K562 (cell line): ENCODE measurements at regions of chr4 and their contacts with region 1.

Region 1: GRCh38 chr4:155953151-155954114 is at the start of gene CTSO:
- DNase-seq: peak; percentile 9 to 40 (median 22)
- ATAC-seq: peak; percentile 98
- H3K4me3 ChIP-seq: peak within 1 kb of the TSS; percentile 51
- H3K27ac ChIP-seq: no peak within 1 kb of the TSS
- H3K4me1 ChIP-seq: peaks cover 0 to 7% of the 10 kb centered on the region in 2 experiments; a peak in 2 of 5 replicates
- H3K27me3 ChIP-seq: no peaks in the 10 kb centered on the region
- CTCF ChIP-seq: peak; percentile 35 to 53 (median 38); a peak in 4 of 6 replicates
- EP300 ChIP-seq: no peak
- POLR2A ChIP-seq: no peak
- RAD21 ChIP-seq: peak; percentile 32 to 38; a peak in 3 of 4 replicates
- polyA plus RNA-seq, gene CTSO: not detected

Region 2: GRCh38 chr4:155442267-155443105 is 510.9 kb before region 1 on chr4:
- CTCF ChIA-PET with region 1: no interaction called
- POLR2A ChIA-PET with region 1: no interaction called
- in situ Hi-C with region 1: no loop called
- intact Hi-C with region 1: loop called (anchors 5 kb)
- DNase-seq: peak; percentile 23 to 48 (median 46)
- ATAC-seq: peak; percentile 56; the same call in 1 of the 3 replicates
- H3K4me3 ChIP-seq: no peak overlapping the region
- H3K27ac ChIP-seq: no peak overlapping the region
- H3K4me1 ChIP-seq: no peaks in the 10 kb centered on the region
- H3K27me3 ChIP-seq: no peaks in the 10 kb centered on the region
- CTCF ChIP-seq: peak; percentile 42 to 65 (median 58)
- EP300 ChIP-seq: no peak
- POLR2A ChIP-seq: no peak
- RAD21 ChIP-seq: peak in 1 of 2 experiments; percentile 43; a peak in 2 of 4 replicates